Dendritic cell treated with granulocyte-macrophage colony-stimulating factor and Interleukin-4, amounts not matched to agents 40 ng/mL and 50 ng/mL, for 4 days (primary cell): ENCODE measurements at regions of chr7 and their contacts with region 1.

Region 1: DNA sequence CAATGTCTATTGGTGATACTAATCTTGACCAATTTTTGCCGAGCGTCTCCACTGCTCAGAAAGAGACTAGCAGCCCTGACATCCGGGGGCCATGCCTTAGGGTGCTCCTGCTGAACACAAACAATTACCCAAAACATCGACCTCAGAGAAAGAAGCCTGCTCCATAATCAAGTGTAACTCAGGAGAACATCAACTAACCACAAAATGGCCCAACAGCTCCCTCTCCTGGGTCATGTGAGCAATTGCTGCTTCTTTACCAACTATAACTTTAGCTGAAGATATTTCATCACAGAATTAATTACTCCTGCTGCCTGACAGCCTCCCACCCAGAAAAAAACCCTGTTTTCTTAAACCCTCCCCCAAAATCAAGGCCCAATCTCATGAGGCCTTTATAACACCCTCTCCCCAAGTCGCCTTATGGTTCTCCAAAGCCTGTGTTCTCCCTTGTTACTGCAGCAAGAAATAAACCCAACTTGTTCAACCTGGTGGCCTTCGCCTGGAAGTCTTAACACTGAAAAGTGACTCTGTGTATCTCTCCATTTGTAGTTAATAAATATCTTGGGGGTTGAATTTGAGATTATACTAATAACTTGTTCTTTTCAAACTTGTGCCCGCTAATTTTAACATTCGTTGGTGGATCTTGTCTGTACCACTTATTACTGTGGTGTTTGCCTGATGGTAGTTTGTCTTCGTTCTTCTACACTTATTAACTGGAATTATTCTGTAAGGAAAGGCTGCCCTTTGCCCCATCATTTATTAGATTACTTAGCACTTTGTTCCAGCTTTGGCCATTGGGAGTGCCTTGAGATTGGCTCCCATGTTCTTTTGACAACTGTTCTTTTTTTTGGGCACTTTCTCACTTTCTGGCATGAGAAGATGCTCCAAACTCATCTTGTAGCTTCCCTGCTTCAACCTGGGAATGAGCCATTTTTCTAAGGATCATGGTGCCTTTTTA is 21.2 kb upstream of the RAMP3 start:
- H3K4me3 Mint-ChIP-seq: no peak overlapping the region
- H3K27ac Mint-ChIP-seq: no peak overlapping the region
- H3K4me1 Mint-ChIP-seq: peaks cover 29% of the 10 kb centered on the region
- H3K27me3 Mint-ChIP-seq: no peaks in the 10 kb centered on the region

Region 2: DNA sequence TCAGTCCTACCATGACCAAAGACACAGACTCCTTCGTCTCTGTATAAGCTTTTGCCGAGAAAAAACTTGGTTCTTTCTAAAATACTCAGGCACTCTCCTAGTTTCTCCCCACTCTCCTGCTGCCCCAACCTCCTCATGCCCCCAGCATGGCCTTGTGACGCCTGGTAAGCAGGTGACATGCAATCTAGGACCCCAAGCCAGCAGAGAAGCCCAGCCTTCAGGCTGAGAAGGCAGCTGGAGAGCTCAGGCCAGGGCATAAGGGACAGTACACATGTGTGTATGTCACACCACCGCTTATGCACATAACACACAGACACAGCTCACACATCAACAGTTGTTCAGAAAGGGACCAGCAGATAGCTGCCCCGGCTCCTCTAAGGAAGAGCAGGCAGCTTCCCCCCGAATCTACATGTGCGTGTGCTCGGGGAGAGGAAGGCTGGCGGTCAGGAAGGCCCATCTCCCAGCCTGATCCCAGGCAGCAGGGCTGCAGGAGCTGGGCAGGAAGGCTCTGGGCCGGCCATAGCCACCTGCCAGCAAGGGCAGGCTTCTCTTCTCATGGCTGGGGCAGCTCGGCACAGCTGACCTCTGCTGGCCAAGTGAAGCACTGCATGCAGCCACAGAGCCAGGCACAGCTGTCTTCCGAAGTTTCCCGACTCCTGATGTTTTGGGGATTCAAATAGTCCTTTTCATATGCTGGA is 571.1 kb before region 1 on chr7:
- intact Hi-C with region 1: no loop called
- H3K4me3 Mint-ChIP-seq: no peak overlapping the region
- H3K27ac Mint-ChIP-seq: no peak overlapping the region
- H3K4me1 Mint-ChIP-seq: peaks cover 30% of the 10 kb centered on the region
- H3K27me3 Mint-ChIP-seq: no peaks in the 10 kb centered on the region

Region 3: GRCh38 chr7:44587843-44588711 is 548.3 kb before region 1 on chr7:
- intact Hi-C with region 1: loop called (anchors 5 kb)
- H3K4me3 Mint-ChIP-seq: no peak overlapping the region
- H3K27ac Mint-ChIP-seq: no peak overlapping the region
- H3K4me1 Mint-ChIP-seq: peaks cover 2% of the 10 kb centered on the region
- H3K27me3 Mint-ChIP-seq: peaks cover 8% of the 10 kb centered on the region

Region 4: DNA sequence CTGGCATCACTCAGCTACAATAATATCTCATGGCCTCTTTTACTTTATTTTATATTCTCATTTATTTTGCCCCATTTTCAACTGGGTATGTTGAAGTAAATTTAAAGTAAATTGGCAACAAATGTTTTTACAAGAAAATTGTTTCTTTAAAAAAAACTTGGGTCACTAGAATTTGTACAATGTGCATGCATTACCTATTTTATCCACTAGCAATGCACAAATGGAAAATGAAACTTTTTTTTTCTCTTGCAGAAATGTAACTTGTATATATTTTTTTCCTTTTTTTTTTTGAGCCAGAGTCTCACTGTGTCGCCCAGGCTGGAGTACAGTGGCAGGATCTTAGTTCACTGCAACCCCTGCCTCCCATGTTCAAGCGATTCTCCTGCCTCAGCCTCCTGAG is 278.2 kb before region 1 on chr7:
- intact Hi-C with region 1: loop called (anchors 2 kb)
- H3K4me3 Mint-ChIP-seq: no peak overlapping the region
- H3K27ac Mint-ChIP-seq: no peak overlapping the region
- H3K4me1 Mint-ChIP-seq: peaks cover 6% of the 10 kb centered on the region
- H3K27me3 Mint-ChIP-seq: no peaks in the 10 kb centered on the region

Region 5: DNA sequence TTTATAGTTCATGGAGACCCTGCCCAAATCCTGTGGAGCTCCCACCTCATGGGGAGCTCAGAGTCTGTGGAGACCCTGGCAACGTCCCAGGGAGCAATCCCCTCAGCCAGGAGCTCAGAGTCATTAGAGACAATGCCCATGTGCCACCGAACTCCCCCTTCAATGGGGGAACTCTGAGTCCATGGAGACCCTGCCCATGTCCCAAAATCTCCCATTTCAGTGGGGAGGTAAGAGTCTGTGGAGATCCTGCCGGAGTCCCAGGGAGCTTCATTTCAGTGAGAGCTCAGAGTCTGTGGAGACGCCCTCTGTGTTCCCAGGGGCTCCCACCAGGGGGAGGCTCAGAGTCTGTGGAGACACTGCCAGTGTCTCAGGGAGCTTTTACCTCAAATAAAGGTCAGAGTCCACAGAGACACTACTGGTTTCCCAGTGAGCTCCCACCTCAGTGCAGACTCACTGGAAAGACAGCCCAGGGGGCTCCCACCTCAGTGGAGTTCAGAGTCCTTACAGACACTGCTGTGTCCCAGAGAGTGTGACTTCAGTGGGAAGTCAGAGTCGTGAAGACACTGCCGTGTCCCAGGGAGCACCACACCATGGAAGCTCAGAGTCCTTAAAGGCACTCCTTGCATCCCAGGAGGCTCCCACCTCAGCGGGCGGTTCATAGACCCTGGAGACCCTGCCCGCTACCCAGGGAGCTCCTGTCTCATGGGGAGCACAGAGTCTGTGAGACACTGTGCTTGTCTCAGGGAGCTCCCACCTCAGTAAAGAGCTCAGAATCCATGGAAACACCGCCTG is 162.6 kb before region 1 on chr7:
- intact Hi-C with region 1: loop called (anchors 1 kb)
- H3K4me3 Mint-ChIP-seq: no peak overlapping the region
- H3K27ac Mint-ChIP-seq: peak overlapping the region; percentile 22
- H3K4me1 Mint-ChIP-seq: peaks cover 58% of the 10 kb centered on the region
- H3K27me3 Mint-ChIP-seq: no peaks in the 10 kb centered on the region

Region 6: DNA sequence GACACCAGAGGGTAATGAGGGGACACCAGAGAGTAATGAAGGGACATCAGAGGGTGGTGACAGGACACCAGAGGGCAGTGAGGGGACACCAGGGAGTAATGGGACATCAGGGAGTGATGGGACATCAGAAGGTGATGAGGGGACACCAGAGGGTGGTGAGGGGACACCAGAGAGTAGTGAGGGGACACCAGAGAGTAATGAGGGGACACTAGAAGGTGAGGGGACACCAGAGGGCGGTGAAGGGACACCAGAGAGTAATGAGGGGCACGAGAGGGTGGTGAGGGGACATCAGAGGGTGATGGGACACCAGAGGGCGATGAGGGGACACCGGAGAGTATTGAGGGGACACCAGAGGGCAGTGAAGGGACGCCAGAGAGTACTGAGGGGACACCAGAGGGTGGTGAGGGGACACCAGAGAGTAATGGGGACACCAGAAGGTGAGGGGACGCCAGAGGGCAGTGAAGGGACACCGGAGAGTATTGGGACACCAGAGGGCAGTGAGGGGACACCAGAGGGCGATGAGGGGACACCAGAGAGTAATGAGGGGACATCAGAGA is 58.2 kb before region 1 on chr7:
- intact Hi-C with region 1: loop called (anchors 2 kb)
- H3K4me3 Mint-ChIP-seq: no peak overlapping the region
- H3K27ac Mint-ChIP-seq: peak overlapping the region; percentile 9
- H3K4me1 Mint-ChIP-seq: peaks cover 20% of the 10 kb centered on the region
- H3K27me3 Mint-ChIP-seq: no peaks in the 10 kb centered on the region

Region 7: DNA sequence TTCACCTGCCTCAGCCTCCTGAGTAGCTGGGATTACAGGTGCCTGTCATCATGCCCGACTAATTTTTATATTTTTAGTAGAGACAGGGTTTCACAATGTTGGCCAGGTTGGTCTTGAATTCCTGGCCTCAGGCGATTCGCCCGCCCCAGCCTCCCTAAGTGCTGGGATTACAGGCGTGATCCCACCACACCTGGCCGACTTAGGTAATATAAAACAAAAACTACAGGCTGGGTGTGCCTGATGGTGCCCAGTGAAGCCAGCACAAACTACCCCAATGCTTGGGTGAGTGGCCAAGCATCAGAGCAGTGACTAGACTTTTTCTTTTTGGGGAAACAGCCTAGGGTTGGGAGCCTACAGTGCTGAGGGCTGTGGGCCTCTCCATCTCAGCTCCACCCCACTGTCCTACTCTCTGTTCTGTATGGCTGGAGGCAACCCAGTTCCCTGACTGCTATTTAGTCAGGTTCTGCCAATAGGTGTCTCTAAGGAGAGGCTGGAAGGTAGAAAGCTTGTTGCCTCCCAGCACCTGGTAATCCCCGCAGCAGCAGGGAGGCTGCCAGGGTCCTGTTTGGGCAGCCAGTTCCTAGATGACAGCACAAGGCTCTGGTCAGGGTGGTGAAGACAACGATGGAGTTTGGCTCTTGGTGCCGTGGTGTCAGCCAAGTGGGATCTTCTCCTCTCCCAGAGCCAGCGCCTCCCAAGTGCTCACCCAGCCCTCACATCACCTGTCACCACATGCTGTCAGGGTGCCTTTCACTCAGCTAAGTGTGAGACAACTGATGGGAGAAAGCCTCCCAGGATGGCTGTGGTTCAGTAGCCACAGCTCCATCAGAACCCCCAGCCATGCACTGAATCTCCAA is 37.2 kb before region 1 on chr7:
- intact Hi-C with region 1: no loop called
- H3K4me3 Mint-ChIP-seq: no peak overlapping the region
- H3K27ac Mint-ChIP-seq: no peak overlapping the region
- H3K4me1 Mint-ChIP-seq: no peaks in the 10 kb centered on the region
- H3K27me3 Mint-ChIP-seq: no peaks in the 10 kb centered on the region